Breast epithelium (tissue), 4 donors: ENCODE measurements at regions of chr4 and their contacts with region 1.

Region 1: DNA sequence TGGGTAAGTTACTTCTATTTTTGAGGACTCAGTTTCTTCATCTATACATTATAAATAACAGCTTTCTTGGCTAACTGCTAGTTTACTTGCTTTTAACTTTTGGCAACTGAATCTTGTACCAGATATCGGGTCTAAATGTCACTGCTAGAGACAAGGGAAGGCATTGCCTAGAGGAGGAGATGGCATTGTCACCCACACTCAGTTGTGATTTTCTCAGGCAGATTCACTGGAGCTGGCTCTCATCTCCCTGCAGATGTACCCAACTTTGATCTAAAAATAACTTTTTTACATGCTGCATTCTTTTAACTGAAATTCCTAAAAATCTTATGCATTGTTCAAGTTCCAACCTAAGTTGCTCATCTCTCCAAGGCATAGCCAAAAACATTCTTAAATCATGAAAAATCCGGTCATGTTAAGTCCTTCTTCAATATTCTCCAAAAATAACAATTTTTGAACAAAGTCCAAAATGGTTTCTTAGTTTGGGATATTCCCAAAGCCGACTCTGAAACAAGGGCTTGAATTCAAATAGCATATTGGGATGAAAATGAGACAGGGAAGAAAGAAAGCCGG is 469.0 kb upstream of the BOD1L1 start:
- DNase-seq: no peak
- H3K4me3 ChIP-seq: no peak overlapping the region
- H3K27ac ChIP-seq: no peak overlapping the region
- H3K4me1 ChIP-seq: no peaks in the 10 kb centered on the region
- H3K27me3 ChIP-seq: no peaks in the 10 kb centered on the region
- CTCF ChIP-seq: no peak
- POLR2A ChIP-seq: no peak

Region 2: GRCh38 chr4:14072506-14072905 is 24.0 kb before region 1 on chr4:
- intact Hi-C with region 1: loop called (anchors 2 kb)
- DNase-seq: no peak
- H3K4me3 ChIP-seq: no peak overlapping the region
- H3K27ac ChIP-seq: no peak overlapping the region
- H3K4me1 ChIP-seq: no peaks in the 10 kb centered on the region
- H3K27me3 ChIP-seq: no peaks in the 10 kb centered on the region
- CTCF ChIP-seq: no peak
- POLR2A ChIP-seq: no peak

Region 3: DNA sequence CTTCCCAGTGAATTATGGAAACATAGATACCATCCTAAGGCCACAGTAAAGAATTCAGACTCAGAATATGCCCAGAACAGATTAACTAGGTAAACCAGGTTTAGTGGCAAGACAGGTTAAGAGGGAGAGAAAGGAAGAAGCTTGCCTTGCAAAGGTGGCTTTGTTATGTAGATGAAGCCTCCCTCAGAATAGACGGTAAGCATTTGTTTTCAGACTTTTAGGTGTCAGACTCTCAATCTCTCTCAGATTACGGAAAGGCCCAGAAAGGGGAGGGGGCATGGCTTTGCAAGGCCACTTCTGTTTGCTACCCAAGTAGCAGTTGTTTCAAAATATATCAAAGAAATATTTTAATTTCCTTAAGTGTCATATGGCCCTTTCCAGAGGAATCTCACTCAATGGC is 11.9 kb before region 1 on chr4:
- intact Hi-C with region 1: loop called (anchors 1 kb)
- DNase-seq: no peak
- H3K4me3 ChIP-seq: no peak overlapping the region
- H3K27ac ChIP-seq: no peak overlapping the region
- H3K4me1 ChIP-seq: no peaks in the 10 kb centered on the region
- H3K27me3 ChIP-seq: no peaks in the 10 kb centered on the region
- CTCF ChIP-seq: no peak
- POLR2A ChIP-seq: no peak

Region 4: GRCh38 chr4:15836362-15836761 is 1739.9 kb after region 1 on chr4:
- intact Hi-C with region 1: loop called (anchors 10 kb)
- DNase-seq: no peak
- H3K4me3 ChIP-seq: no peak overlapping the region
- H3K27ac ChIP-seq: no peak overlapping the region
- H3K4me1 ChIP-seq: no peaks in the 10 kb centered on the region
- H3K27me3 ChIP-seq: no peaks in the 10 kb centered on the region
- CTCF ChIP-seq: no peak
- POLR2A ChIP-seq: no peak